WTC11 (cell line): ENCODE measurements at regions of chr4 and their contacts with region 1.

Region 1: DNA sequence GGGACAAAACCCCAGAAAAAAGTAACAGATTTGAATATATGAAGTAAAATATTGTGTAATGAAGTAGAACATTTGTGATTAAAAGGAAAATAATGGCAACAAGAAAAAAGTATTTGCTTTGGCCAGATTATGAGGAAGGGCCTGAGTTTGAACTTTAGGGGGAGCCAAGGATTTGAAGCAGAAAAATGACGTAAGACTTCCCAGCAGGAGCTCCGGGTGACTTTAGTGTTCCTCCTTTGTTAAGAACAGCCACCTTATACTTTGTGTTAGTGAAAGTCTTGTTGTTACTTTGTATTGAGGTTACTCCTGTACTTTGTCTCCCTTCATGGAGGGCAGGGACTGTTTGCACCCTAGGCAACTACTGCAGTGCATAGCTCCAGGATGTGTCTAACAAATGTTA is 41.1 kb downstream of the DCUN1D4 start:
- DNase-seq: no peak
- ATAC-seq: no peak
- H3K4me3 Mint-ChIP-seq: no peak overlapping the region
- H3K27ac Mint-ChIP-seq: peak overlapping the region; percentile 90
- H3K4me1 Mint-ChIP-seq: peaks cover 22% of the 10 kb centered on the region
- H3K27me3 Mint-ChIP-seq: no peaks in the 10 kb centered on the region
- CTCF ChIP-seq: no peak

Region 2: DNA sequence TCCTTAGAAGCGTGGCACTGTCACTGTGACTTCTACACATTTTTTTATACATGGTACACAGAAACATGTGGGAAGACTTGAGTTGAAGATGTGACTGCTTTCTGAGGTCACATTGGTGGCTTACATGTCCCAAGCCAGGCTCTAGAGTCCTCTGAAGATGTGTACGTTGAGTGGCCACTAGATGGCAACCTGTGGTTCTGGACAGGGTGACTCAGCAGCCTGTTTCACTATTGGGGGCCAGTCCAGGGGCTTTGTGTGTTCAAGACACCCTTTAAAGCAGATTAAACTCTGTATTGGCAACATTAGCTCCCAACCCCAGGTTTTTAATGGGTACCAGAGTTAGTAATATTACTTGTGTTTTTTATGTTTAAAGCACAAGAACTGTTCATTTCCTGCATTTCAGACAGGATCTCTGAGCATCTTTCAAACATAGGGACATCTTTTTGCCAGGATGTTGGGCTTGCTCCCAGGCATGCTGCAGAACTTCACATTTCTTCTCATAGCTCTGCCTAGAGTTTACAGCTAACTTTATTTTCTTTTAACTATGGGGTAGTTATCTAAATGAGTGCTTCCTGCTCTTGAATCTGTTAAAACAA is 11.9 kb after region 1 on chr4:
- CTCF ChIA-PET with region 1: interaction called, 10 read pairs
- POLR2A ChIA-PET with region 1: interaction called, 3 read pairs
- DNase-seq: peak; percentile 57
- ATAC-seq: peak; percentile 99
- H3K4me3 Mint-ChIP-seq: no peak overlapping the region
- H3K27ac Mint-ChIP-seq: peak overlapping the region; percentile 79
- H3K4me1 Mint-ChIP-seq: peaks cover 6% of the 10 kb centered on the region
- H3K27me3 Mint-ChIP-seq: no peaks in the 10 kb centered on the region
- CTCF ChIP-seq: peak; percentile 49; the same call in 1 of the 2 replicates

Region 3: GRCh38 chr4:52260514-52261210 is 376.6 kb after region 1 on chr4:
- CTCF ChIA-PET with region 1: no interaction called
- POLR2A ChIA-PET with region 1: no interaction called
- DNase-seq: no peak
- ATAC-seq: no peak
- H3K4me3 Mint-ChIP-seq: no peak overlapping the region
- H3K27ac Mint-ChIP-seq: no peak overlapping the region
- H3K4me1 Mint-ChIP-seq: no peaks in the 10 kb centered on the region
- H3K27me3 Mint-ChIP-seq: no peaks in the 10 kb centered on the region
- CTCF ChIP-seq: no peak